ENCODE measurements at regions of chr1 and their contacts with region 1.

Region 1: GRCh38 chr1:17661546-17662157 is 93.5 kb upstream of the ACTL8 start:
- DNase-seq: peak; percentile 73
- H3K4me3 Mint-ChIP-seq: no peak overlapping the region
- H3K27ac Mint-ChIP-seq: no peak overlapping the region
- H3K4me1 Mint-ChIP-seq: no peaks in the 10 kb centered on the region
- H3K27me3 Mint-ChIP-seq: no peaks in the 10 kb centered on the region
- CTCF ChIP-seq: peak; percentile 93

Region 2: DNA sequence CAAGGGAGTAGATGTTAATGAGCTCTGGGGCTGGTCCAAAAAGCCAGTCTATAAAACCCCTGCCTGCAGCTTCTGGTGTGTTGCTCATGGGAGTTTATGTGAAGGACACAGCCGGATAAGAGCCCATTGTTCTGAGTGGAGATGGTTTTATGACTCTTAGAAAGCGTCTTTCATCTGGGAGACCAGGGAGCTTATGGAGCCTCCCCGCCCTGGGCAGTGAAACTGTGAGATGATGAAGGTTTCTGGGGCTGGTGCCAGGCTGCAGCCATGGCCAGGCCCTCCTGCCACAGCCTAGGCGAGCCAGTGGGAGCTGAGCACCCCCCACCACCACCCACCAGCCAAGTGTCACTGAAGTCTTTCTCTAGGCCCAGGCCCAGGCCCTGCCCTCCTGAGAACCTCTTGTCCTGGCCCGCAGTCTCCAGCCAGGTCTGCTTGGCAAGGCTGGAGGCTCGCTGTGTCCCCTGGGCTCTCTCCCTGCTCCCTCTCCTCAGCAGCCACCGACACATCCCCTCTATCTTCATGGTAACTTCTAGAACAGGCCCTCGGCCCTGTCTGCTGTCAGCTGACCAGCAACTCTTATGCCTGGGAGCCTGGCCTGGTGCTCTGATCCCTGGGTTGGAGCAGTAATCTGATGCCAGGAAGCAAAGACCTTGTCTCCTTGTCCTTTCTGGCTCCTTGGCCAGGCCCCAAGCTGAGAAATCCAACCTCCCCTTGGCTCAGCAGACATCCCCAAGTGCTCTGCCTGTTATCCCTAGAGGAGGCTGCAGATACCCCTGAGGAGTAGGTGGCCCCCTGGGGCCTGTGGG is 129.8 kb before region 1 on chr1:
- CTCF ChIA-PET with region 1: no interaction called
- POLR2A ChIA-PET with region 1: no interaction called
- intact Hi-C with region 1: no loop called
- DNase-seq: no peak
- H3K4me3 Mint-ChIP-seq: no peak overlapping the region
- H3K27ac Mint-ChIP-seq: no peak overlapping the region
- H3K4me1 Mint-ChIP-seq: no peaks in the 10 kb centered on the region
- H3K27me3 Mint-ChIP-seq: no peaks in the 10 kb centered on the region
- CTCF ChIP-seq: no peak

Region 3: GRCh38 chr1:17563494-17564281 is 98.0 kb before region 1 on chr1:
- CTCF ChIA-PET with region 1: no interaction called
- POLR2A ChIA-PET with region 1: no interaction called
- intact Hi-C with region 1: no loop called
- DNase-seq: no peak
- H3K4me3 Mint-ChIP-seq: no peak overlapping the region
- H3K27ac Mint-ChIP-seq: no peak overlapping the region
- H3K4me1 Mint-ChIP-seq: peaks cover 27% of the 10 kb centered on the region
- H3K27me3 Mint-ChIP-seq: no peaks in the 10 kb centered on the region
- CTCF ChIP-seq: no peak

Region 4: DNA sequence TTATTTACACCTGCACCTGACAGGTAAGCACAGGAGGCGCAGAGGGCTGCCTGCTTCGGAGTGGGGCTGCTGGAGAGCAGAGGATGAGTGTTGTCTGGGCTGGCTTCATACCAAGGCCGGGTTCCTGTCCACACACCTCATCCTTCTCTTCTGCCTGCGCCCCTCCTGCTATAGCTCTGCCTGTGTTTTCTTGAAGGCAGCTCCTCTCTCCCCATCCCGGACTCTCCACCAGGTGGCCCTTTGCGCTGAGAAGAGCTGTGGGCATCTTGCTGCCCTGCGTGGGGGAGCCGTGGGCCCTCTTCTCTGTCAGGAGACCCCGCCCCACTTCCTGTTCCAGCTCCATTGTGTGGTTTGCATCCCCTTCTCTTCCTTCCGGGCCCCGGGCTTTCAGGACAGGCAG is 87.1 kb before region 1 on chr1:
- CTCF ChIA-PET with region 1: no interaction called
- POLR2A ChIA-PET with region 1: no interaction called
- intact Hi-C with region 1: no loop called
- DNase-seq: no peak
- H3K4me3 Mint-ChIP-seq: no peak overlapping the region
- H3K27ac Mint-ChIP-seq: no peak overlapping the region
- H3K4me1 Mint-ChIP-seq: peaks cover 24% of the 10 kb centered on the region
- H3K27me3 Mint-ChIP-seq: no peaks in the 10 kb centered on the region
- CTCF ChIP-seq: no peak

Region 5: GRCh38 chr1:17648457-17649145 is 13.1 kb before region 1 on chr1:
- CTCF ChIA-PET with region 1: interaction called, 25 read pairs
- POLR2A ChIA-PET with region 1: no interaction called
- intact Hi-C with region 1: no loop called
- DNase-seq: no peak
- H3K4me3 Mint-ChIP-seq: no peak overlapping the region
- H3K27ac Mint-ChIP-seq: no peak overlapping the region
- H3K4me1 Mint-ChIP-seq: no peaks in the 10 kb centered on the region
- H3K27me3 Mint-ChIP-seq: no peaks in the 10 kb centered on the region
- CTCF ChIP-seq: no peak

Region 6: GRCh38 chr1:17826165-17826488 is 164.5 kb after region 1 on chr1:
- CTCF ChIA-PET with region 1: no interaction called
- POLR2A ChIA-PET with region 1: no interaction called
- intact Hi-C with region 1: loop called (anchors 1 kb)
- DNase-seq: peak; percentile 23
- H3K4me3 Mint-ChIP-seq: no peak overlapping the region
- H3K27ac Mint-ChIP-seq: no peak overlapping the region
- H3K4me1 Mint-ChIP-seq: no peaks in the 10 kb centered on the region
- H3K27me3 Mint-ChIP-seq: peaks cover 56% of the 10 kb centered on the region
- CTCF ChIP-seq: peak; percentile 45

Region 7: GRCh38 chr1:17909634-17910033 is 248.0 kb after region 1 on chr1:
- CTCF ChIA-PET with region 1: no interaction called
- POLR2A ChIA-PET with region 1: no interaction called
- intact Hi-C with region 1: loop called (anchors 1 kb)
- DNase-seq: peak; percentile 42
- H3K4me3 Mint-ChIP-seq: no peak overlapping the region
- H3K27ac Mint-ChIP-seq: no peak overlapping the region
- H3K4me1 Mint-ChIP-seq: no peaks in the 10 kb centered on the region
- H3K27me3 Mint-ChIP-seq: peaks cover 51% of the 10 kb centered on the region
- CTCF ChIP-seq: peak; percentile 40

Region 8: GRCh38 chr1:17922833-17923232 is 261.2 kb after region 1 on chr1:
- CTCF ChIA-PET with region 1: no interaction called
- POLR2A ChIA-PET with region 1: no interaction called
- intact Hi-C with region 1: loop called (anchors 2 kb)
- DNase-seq: peak; percentile 54
- H3K4me3 Mint-ChIP-seq: no peak overlapping the region
- H3K27ac Mint-ChIP-seq: no peak overlapping the region
- H3K4me1 Mint-ChIP-seq: no peaks in the 10 kb centered on the region
- H3K27me3 Mint-ChIP-seq: peaks cover 45% of the 10 kb centered on the region
- CTCF ChIP-seq: peak; percentile 53

Region 9: GRCh38 chr1:17998889-17999288 is 337.2 kb after region 1 on chr1:
- CTCF ChIA-PET with region 1: no interaction called
- POLR2A ChIA-PET with region 1: no interaction called
- intact Hi-C with region 1: loop called (anchors 5 kb)
- DNase-seq: peak; percentile 50
- H3K4me3 Mint-ChIP-seq: no peak overlapping the region
- H3K27ac Mint-ChIP-seq: no peak overlapping the region
- H3K4me1 Mint-ChIP-seq: no peaks in the 10 kb centered on the region
- H3K27me3 Mint-ChIP-seq: peaks cover 44% of the 10 kb centered on the region
- CTCF ChIP-seq: no peak

Region 10: DNA sequence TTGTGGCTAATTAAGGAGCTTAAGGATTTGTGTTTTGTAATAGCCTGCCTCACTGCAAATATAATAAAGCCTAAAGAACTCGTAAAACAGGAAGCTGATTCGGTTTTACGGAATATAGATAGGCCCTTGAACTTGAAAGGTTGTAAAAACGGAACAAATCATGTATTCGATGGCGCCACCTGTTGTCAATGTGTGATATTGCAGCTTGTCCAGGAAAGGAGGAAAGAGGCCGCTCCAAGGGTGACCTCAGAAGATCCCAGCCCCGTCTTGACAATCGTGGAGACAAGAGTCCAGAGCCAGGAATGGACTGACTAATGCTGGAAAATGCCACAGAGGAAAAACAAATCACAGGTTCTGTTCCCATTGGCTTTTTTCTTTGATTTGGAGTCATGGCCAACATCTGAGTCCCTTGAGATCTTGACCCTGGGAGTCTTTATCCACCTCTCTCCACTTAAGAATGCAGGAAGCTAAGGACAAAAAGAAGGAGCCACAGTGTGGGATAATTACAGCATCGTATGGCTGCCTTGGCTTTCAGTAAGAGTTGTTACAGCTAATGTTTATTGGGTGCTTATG is 438.9 kb after region 1 on chr1:
- CTCF ChIA-PET with region 1: interaction called, 35 read pairs
- POLR2A ChIA-PET with region 1: no interaction called
- intact Hi-C with region 1: loop called (anchors 1 kb)
- DNase-seq: peak; percentile 75
- H3K4me3 Mint-ChIP-seq: no peak overlapping the region
- H3K27ac Mint-ChIP-seq: no peak overlapping the region
- H3K4me1 Mint-ChIP-seq: no peaks in the 10 kb centered on the region
- H3K27me3 Mint-ChIP-seq: peaks cover 43% of the 10 kb centered on the region
- CTCF ChIP-seq: peak; percentile 68

Measured in MCF 10A (cell line).